CD4-positive, alpha-beta memory T cell (primary cell): ENCODE measurements at regions of chr17 and their contacts with region 1.

Region 1: DNA sequence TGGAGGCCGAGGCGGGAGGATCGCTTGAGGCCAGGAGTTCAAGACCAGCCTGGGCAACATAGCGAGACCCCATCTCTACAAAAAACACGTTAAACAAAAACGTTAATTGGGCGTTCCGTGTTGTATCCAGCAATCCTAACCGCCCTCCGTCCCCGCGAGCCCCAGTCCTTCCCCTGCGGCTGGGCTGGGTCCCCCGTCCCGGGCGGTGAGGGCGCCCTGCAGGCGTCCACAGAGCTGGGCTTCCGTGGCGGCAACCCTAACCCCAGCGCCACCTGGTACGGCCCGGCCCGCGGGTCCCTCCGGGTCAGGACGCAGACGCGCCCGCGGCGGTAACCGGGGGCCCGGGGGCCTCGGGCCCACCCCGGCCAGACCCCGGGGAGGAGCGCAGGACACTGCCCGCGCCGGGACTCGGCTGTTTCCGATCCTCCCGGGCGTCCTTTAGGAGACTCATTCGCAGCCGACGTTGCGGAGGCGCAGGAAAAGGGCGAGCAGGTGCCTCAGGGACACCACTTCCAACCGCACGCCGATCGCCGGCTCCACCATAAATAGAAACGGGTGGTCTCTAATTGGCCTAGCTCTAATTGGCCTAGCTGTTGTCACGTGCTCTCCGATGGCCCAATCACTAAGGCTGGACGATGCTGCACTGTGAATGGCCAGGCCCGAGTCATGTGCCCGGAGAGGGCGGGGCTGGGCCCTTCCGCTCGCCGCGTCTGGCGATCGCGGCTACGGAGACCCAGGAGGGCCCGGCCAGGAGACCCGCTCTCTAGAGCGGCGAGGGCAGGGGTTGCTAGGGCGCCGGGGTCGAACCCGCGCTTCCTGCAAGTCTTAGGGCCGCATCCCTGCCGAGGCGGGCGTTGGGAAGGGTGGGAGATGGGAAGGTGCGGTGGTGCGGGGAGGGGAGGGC is 19.0 kb upstream of the CSNK1D start:
- DNase-seq: peak; percentile 92 to 95 (median 92)
- H3K4me3 ChIP-seq: peak overlapping the region; percentile 42 to 66
- H3K4me3 Mint-ChIP-seq: peak overlapping the region; percentile 85 to 95 (median 91)
- H3K27ac ChIP-seq: peak overlapping the region; percentile 84
- H3K27ac Mint-ChIP-seq: peak overlapping the region; percentile 90 to 97 (median 95)
- H3K4me1 ChIP-seq: peaks cover 24% of the 10 kb centered on the region
- H3K4me1 Mint-ChIP-seq: peaks cover 29 to 46% (median 36%) of the 10 kb centered on the region in 4 donors
- H3K27me3 ChIP-seq: no peaks in the 10 kb centered on the region
- H3K27me3 Mint-ChIP-seq: no peaks in the 10 kb centered on the region

Region 2: DNA sequence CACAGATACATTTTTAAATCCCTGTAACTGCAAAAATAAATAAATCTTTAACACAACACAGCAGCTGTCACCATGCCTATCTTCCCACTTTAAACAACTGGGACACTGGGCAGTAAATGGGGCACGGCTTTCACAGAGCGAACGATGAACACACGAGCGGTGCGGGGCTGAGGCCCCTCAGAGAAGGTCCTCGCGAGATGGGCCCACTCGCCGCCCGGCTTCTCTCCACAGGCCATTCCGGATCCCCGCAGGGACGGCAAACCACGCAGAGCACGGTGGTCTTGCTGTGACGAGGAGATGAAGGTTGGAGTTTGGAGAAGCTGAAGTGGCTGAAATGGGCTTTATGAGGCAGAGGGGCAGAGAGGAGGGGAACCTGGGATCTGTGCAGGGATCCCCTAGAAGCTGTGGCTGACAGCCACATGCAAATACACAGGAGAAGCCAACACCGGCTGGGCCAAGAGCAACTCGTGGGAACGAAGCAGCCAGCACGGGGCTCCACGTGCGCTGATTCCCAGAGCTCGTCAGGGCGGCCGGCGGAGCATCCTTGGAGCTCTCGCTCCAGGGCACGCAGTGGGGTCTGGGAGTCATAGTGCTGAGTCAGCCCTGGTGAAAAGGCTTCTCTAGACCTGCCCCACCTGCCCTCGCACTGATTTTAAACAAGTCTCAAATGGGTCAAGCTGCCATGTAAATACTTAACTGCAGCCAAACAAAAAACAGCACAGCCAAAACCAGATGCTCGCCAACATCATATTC is 111.6 kb before region 1 on chr17:
- CTCF ChIA-PET with region 1: no interaction called
- POLR2A ChIA-PET with region 1: no interaction called
- intact Hi-C with region 1: no loop called
- DNase-seq: no peak
- H3K4me3 ChIP-seq: no peak overlapping the region
- H3K4me3 Mint-ChIP-seq: no peak overlapping the region
- H3K27ac ChIP-seq: no peak overlapping the region
- H3K27ac Mint-ChIP-seq: peak overlapping the region in 2 of 7 donors; percentile 24 to 73
- H3K4me1 ChIP-seq: no peaks in the 10 kb centered on the region
- H3K4me1 Mint-ChIP-seq: no peaks in the 10 kb centered on the region
- H3K27me3 ChIP-seq: no peaks in the 10 kb centered on the region
- H3K27me3 Mint-ChIP-seq: no peaks in the 10 kb centered on the region

Region 3: DNA sequence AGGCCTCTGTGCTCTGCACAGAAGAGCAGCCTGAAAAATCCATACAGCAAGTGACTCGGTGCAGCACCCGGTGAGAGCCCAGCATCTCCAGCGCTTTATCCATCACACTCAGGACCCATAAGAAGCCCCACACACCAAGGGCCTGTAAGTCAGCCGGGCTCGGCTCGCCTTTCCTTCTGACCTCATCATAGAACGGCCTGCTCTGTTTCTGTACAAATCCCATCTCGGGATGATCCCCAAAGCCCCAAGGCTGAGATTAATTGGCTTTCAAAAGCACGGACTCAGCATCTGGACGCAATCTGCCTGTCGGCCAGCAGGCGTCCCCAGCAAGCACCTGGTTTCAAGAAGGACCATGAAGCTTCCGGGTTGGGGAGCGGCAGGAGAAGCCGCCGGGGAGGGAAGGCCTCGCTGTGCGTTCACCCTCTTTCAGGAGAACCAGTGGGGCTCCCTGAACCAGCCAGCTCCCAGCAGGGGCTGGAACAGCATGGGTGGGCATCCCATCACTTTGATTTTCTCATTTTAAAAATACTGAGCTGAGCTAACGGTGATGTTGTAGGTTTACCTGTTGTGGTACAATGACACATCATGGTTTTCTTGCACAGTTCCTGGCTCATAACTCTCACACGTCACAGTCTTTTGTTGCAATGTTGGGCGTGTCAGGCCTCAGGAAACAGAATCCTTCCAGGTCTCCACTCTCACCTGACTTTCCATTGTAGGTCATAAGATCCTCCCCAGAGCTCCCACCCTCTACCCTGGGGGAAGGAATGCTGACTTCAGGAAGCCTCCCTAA is 86.6 kb before region 1 on chr17:
- CTCF ChIA-PET with region 1: interaction called, 9 read pairs
- POLR2A ChIA-PET with region 1: interaction called, 26 read pairs
- intact Hi-C with region 1: loop called (anchors 5 kb)
- DNase-seq: peak; percentile 84 to 87 (median 86)
- H3K4me3 ChIP-seq: no peak overlapping the region
- H3K4me3 Mint-ChIP-seq: peak overlapping the region in 7 of 8 donors; percentile 39 to 81 (median 54)
- H3K27ac ChIP-seq: peak overlapping the region; percentile 61
- H3K27ac Mint-ChIP-seq: peak overlapping the region; percentile 96 to 99 (median 97)
- H3K4me1 ChIP-seq: peaks cover 26% of the 10 kb centered on the region
- H3K4me1 Mint-ChIP-seq: peaks cover 20 to 46% (median 33%) of the 10 kb centered on the region in 4 donors
- H3K27me3 ChIP-seq: no peaks in the 10 kb centered on the region
- H3K27me3 Mint-ChIP-seq: no peaks in the 10 kb centered on the region

Region 4: DNA sequence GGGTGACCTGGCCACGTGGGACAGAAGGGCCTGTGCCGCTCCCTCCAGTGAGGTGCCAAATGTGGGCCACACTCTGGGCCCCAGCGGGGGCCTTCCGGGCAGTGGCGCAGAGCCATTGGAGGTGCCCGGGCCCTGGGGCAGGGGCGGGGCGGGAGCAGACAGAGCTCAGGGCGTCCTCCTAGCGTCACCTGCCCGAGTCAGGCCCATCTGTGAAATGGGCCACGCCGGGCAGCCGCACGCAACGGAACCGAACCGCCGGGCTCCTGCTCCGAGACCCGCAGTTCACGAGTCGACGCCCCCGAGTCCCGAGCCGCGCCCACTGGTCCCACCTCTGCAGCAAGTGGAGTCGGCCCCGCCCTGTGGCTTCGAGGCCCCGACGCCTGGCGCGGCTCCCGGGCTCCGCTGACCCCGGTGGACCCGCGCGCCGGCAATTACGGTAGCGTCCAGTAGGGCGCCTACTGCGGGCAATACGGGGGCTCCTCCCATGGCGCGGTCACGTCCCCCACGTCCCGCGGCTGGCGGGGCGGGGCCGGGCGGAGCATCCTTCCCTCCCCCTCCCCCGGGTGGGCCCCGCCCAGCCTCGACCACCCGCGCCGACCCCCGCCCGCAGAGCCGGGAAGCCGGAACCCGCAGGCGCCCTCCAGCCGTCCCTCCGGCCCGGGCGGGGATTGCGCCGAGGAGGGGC is 61.7 kb before region 1 on chr17:
- CTCF ChIA-PET with region 1: interaction called, 28 read pairs
- POLR2A ChIA-PET with region 1: interaction called, 47 read pairs
- intact Hi-C with region 1: loop called (anchors 2 kb)
- DNase-seq: peak; percentile 42 to 76 (median 48)
- H3K4me3 ChIP-seq: peak overlapping the region in 1 of 2 donors; percentile 32
- H3K4me3 Mint-ChIP-seq: peak overlapping the region in 5 of 8 donors; percentile 17 to 84 (median 77)
- H3K27ac ChIP-seq: peak overlapping the region; percentile 38
- H3K27ac Mint-ChIP-seq: no peak overlapping the region
- H3K4me1 ChIP-seq: peaks cover 42% of the 10 kb centered on the region
- H3K4me1 Mint-ChIP-seq: peaks cover 2 to 37% (median 15%) of the 10 kb centered on the region in 4 donors
- H3K27me3 ChIP-seq: no peaks in the 10 kb centered on the region
- H3K27me3 Mint-ChIP-seq: no peaks in the 10 kb centered on the region

Region 5: DNA sequence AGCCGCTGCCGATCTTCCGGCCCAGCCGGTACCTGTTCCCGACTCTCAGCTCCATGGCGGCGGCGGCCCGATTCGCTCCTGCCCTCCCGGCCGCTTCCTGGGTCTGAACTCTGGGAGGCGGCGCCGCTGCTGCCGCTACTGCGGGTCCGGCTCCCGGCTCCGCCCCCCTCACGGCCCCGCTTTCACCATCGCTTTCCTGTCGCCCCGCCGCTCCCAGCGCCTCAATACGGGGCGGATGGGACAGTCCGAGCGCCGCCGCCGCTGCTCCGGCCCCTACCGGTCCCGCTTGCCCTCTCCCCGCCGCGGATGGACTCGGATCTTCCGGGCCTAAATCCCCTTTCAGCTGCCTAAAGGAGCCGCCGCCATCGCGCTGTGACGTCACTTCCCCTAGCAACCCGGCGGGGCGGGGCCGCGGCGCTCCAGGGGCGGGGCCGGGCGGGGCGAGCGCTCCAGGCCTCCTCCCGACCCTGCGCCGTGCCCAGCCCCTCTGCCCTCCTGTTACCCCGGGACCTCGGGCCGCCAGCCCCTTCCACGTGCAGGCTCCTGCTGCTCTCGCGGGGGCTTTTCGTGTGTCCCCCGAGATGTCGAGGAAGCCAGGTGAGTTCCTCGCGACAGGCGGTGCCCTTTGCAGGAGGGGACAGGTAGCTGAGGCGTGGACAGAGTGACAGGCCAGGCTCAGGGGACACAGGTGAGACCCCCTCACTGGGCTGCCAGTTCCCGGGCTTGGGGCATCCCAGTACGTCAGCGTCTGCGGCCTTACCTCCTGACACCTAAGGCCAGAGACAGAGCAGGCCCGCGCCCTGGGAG is 19.0 kb before region 1 on chr17 and contains the start of gene CSNK1D:
- CTCF ChIA-PET with region 1: no interaction called
- POLR2A ChIA-PET with region 1: interaction called, 56 read pairs
- intact Hi-C with region 1: loop called (anchors 1 kb)
- DNase-seq: peak; percentile 88 to 94 (median 90)
- H3K4me3 ChIP-seq: peak within 1 kb of the TSS; percentile 47 to 76
- H3K4me3 Mint-ChIP-seq: peak within 1 kb of the TSS; percentile 91 to 96 (median 94)
- H3K27ac ChIP-seq: peak within 1 kb of the TSS; percentile 80
- H3K27ac Mint-ChIP-seq: peak within 1 kb of the TSS; percentile 92 to 100 (median 98)
- H3K4me1 ChIP-seq: peaks cover 50% of the 10 kb centered on the region
- H3K4me1 Mint-ChIP-seq: peaks cover 31 to 53% (median 40%) of the 10 kb centered on the region in 4 donors
- H3K27me3 ChIP-seq: no peaks in the 10 kb centered on the region
- H3K27me3 Mint-ChIP-seq: no peaks in the 10 kb centered on the region
- total RNA-seq, gene CSNK1D: 182 TPM

Region 6: DNA sequence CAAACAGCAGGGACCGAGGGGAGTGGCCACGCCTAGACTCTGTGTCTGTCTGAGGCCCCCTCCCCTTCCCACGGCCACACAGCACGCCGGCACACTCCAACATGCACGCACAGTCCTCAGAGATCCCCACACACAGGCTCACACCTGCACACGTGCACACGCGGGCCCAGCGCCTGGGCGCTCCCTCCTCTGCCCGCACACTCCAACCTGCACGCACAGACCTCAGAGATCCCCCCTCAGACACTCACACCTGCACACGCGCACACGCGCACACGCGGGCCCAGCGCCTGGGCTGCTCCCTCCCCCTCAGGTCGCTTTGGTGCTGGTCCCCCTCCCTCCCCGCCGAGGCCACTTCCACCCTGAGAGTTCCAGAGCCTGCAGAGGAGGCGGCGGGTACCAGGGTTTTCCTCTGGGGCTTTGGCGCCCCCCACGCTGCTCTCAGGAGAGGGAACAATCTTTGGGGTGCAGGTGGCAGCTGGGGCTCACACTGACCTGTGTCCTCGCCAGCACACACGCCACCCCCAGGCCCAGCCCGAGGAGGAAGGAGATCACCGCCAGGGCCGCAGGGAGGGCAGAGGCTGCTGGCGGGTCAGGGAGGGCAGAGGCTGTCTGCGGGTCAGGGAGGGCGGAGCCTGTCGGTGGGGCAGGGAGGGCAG is 23.3 kb after region 1 on chr17:
- CTCF ChIA-PET with region 1: interaction called, 72 read pairs
- POLR2A ChIA-PET with region 1: interaction called, 172 read pairs
- intact Hi-C with region 1: no loop called
- DNase-seq: peak; percentile 48 to 64 (median 51)
- H3K4me3 ChIP-seq: peak overlapping the region; percentile 51 to 88
- H3K4me3 Mint-ChIP-seq: peak overlapping the region in 7 of 8 donors; percentile 89 to 94 (median 93)
- H3K27ac ChIP-seq: peak overlapping the region; percentile 65
- H3K27ac Mint-ChIP-seq: peak overlapping the region in 6 of 7 donors; percentile 88 to 96 (median 93)
- H3K4me1 ChIP-seq: peaks cover 29% of the 10 kb centered on the region
- H3K4me1 Mint-ChIP-seq: peaks cover 7 to 26% (median 15%) of the 10 kb centered on the region in 4 donors
- H3K27me3 ChIP-seq: no peaks in the 10 kb centered on the region
- H3K27me3 Mint-ChIP-seq: no peaks in the 10 kb centered on the region